H1 (cell line): ENCODE measurements at regions of chr11 and their contacts with region 1.

Region 1: DNA sequence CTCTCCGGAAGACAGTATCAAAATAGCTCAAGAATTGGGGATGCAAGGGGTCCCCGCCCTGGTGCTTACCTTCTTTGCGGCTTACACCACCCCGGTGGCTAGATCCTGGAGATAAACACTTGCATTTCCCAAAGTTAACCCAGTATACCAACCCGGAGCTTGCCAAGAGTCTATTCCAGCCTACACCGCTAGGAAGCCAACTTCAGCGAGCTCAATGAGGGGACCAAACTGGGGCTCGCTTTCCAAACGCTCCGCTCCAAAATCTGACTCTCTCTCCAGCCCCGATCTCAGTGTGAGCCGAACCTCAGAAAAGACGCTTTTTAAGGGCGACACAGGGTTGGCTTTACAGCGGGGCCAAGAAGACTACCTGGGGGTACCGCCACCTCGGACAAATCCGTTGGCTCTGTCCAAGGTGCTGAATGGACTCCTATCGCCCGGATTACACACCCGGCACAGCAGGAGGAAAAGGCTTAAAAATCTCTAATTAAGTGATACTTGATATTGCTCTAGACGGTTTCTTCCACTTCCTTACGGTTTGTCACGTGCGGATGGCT is 20.1 kb upstream of the BDNF start:
- DNase-seq: peak in 1 of 2 experiments; percentile 86
- H3K4me3 ChIP-seq: peak overlapping the region; percentile 63 to 99 (median 78)
- H3K27ac ChIP-seq: no peak overlapping the region
- H3K4me1 ChIP-seq: peaks cover 5 to 15% (median 10%) of the 10 kb centered on the region in 4 experiments
- H3K27me3 ChIP-seq: peaks cover 7 to 29% (median 25%) of the 10 kb centered on the region in 4 experiments
- CTCF ChIP-seq: peak; percentile 28 to 34 (median 29); a peak in 3 of 4 replicates
- EP300 ChIP-seq: no peak
- POLR2A ChIP-seq: no peak
- RAD21 ChIP-seq: peak; percentile 8 to 25; a peak in 3 of 4 replicates

Region 2: DNA sequence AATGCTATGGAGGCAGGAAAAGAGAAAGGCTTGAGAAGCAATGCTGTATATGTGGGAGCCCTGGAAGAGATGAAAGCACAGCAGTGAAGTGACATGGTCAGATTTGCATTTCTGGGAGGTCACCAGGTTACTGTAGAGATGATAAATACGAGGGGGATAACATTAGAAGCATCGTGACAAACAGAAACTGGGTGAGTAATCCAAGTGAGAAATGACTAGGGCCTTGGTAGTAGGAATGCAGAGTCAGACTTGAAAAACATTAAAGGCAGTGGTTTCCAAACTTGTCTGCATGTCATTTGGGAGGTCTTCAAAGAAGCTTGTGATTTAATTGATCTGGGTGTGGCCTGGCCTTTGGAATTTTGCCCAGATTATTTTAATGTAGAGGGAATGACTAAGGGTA is 401.3 kb before region 1 on chr11:
- CTCF ChIA-PET with region 1: no interaction called
- POLR2A ChIA-PET with region 1: no interaction called
- DNase-seq: no peak
- H3K4me3 ChIP-seq: no peak overlapping the region
- H3K27ac ChIP-seq: no peak overlapping the region
- H3K4me1 ChIP-seq: peaks cover 0 to 4% (median 0%) of the 10 kb centered on the region in 4 experiments; a peak in 1 of 7 replicates
- H3K27me3 ChIP-seq: peaks cover 0 to 1% (median 0%) of the 10 kb centered on the region in 4 experiments; a peak in 1 of 7 replicates
- CTCF ChIP-seq: no peak
- EP300 ChIP-seq: no peak
- POLR2A ChIP-seq: no peak
- RAD21 ChIP-seq: no peak

Region 3: DNA sequence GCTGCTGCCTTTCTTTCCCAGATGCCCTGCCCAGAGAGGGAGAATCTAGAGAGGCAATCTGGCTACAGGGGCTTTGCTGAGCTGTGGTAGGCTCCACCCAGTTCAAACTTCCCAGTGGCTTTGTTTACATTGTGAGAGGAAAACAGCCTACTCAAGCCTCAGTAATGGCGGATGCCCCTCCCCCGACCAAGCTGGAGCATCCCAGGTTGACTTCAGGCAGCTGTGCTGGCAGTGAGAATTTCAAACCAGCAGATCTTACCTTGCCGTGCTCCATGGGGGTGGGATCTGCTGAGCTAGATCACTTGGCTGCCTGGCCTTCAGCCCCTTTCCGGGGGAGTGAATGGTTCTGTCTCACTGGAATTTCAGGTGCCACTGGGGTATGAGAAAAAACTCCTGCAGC is 32.3 kb before region 1 on chr11:
- CTCF ChIA-PET with region 1: interaction called, 5 read pairs
- POLR2A ChIA-PET with region 1: interaction called, 13 read pairs
- DNase-seq: peak in 1 of 2 experiments; percentile 71
- H3K4me3 ChIP-seq: peak overlapping the region in 1 of 4 experiments; percentile 3; a peak in 1 of 8 replicates
- H3K27ac ChIP-seq: no peak overlapping the region
- H3K4me1 ChIP-seq: peaks cover 4 to 11% (median 6%) of the 10 kb centered on the region in 4 experiments; a peak in 6 of 7 replicates
- H3K27me3 ChIP-seq: no peaks in the 10 kb centered on the region
- CTCF ChIP-seq: no peak
- EP300 ChIP-seq: peak in 1 of 2 experiments; percentile 35; a peak in 1 of 3 replicates
- POLR2A ChIP-seq: no peak
- RAD21 ChIP-seq: peak in 1 of 2 experiments; percentile 7; a peak in 1 of 4 replicates

Region 4: DNA sequence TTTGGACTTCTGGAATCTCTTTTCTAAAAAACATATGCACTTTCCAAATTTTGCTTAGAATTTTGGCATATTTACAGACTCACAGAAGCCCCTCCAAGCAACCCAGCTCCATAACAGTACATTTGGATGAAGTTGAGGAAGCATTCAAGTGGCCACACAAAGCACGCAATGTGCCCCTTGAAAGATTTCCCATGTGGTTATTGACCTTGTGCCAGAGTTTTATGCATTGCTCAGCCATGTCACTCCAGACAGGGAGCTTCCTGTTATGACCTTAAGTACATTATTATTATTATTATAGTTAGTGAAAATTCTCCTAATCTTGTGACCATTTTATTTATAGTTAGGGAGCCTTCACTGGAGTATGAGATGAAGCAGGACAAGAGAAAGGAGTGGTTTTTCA is 14.9 kb after region 1 on chr11:
- CTCF ChIA-PET with region 1: interaction called, 10 read pairs
- POLR2A ChIA-PET with region 1: interaction called, 7 read pairs
- DNase-seq: no peak
- H3K4me3 ChIP-seq: no peak overlapping the region
- H3K27ac ChIP-seq: no peak overlapping the region
- H3K4me1 ChIP-seq: peaks cover 0 to 10% (median 6%) of the 10 kb centered on the region in 4 experiments; a peak in 3 of 7 replicates
- H3K27me3 ChIP-seq: peaks cover 0 to 3% (median 0%) of the 10 kb centered on the region in 4 experiments; a peak in 2 of 7 replicates
- CTCF ChIP-seq: no peak
- EP300 ChIP-seq: no peak
- POLR2A ChIP-seq: no peak
- RAD21 ChIP-seq: no peak

Region 5: GRCh38 chr11:27861706-27862430 is 141.5 kb after region 1 on chr11:
- CTCF ChIA-PET with region 1: no interaction called
- POLR2A ChIA-PET with region 1: no interaction called
- DNase-seq: no peak
- H3K4me3 ChIP-seq: no peak overlapping the region
- H3K27ac ChIP-seq: no peak overlapping the region
- H3K4me1 ChIP-seq: no peaks in the 10 kb centered on the region
- H3K27me3 ChIP-seq: no peaks in the 10 kb centered on the region
- CTCF ChIP-seq: no peak
- EP300 ChIP-seq: no peak
- POLR2A ChIP-seq: no peak
- RAD21 ChIP-seq: no peak